ENCODE measurements at regions of chr1 and their contacts with region 1.

Region 1: GRCh38 chr1:93629099-93630059 is 52.3 kb downstream of the BCAR3 start:
- DNase-seq: no peak
- H3K4me3 ChIP-seq: no peak overlapping the region
- H3K27ac ChIP-seq: no peak overlapping the region
- H3K4me1 ChIP-seq: 0 out of 7 replicates have a peak, but pooled peaks cover 0 to 2% (median 0%) of the 10 kb centered on the region in 4 experiments
- H3K27me3 ChIP-seq: no peaks in the 10 kb centered on the region
- CTCF ChIP-seq: peak in 2 of 3 experiments; percentile 81 to 86; a peak in 3 of 4 replicates
- EP300 ChIP-seq: no peak; a peak in 1 of 3 replicates
- POLR2A ChIP-seq: no peak
- RAD21 ChIP-seq: peak; percentile 98 to 99

Region 2: GRCh38 chr1:93533677-93534076 is 95.7 kb before region 1 on chr1:
- CTCF ChIA-PET with region 1: no interaction called
- POLR2A ChIA-PET with region 1: no interaction called
- DNase-seq: no peak
- H3K4me3 ChIP-seq: no peak overlapping the region
- H3K27ac ChIP-seq: no peak overlapping the region
- H3K4me1 ChIP-seq: no peaks in the 10 kb centered on the region
- H3K27me3 ChIP-seq: no peaks in the 10 kb centered on the region
- CTCF ChIP-seq: no peak
- EP300 ChIP-seq: no peak
- POLR2A ChIP-seq: no peak
- RAD21 ChIP-seq: no peak

Region 3: GRCh38 chr1:93549811-93550210 is 79.6 kb before region 1 on chr1:
- CTCF ChIA-PET with region 1: no interaction called
- POLR2A ChIA-PET with region 1: no interaction called
- DNase-seq: no peak
- H3K4me3 ChIP-seq: no peak overlapping the region
- H3K27ac ChIP-seq: no peak overlapping the region
- H3K4me1 ChIP-seq: peaks cover 0 to 8% (median 5%) of the 10 kb centered on the region in 4 experiments; a peak in 3 of 7 replicates
- H3K27me3 ChIP-seq: no peaks in the 10 kb centered on the region
- CTCF ChIP-seq: no peak
- EP300 ChIP-seq: no peak
- POLR2A ChIP-seq: no peak
- RAD21 ChIP-seq: no peak

Region 4: GRCh38 chr1:93579891-93580290 is 49.5 kb before region 1 on chr1:
- CTCF ChIA-PET with region 1: no interaction called
- POLR2A ChIA-PET with region 1: no interaction called
- DNase-seq: peak in 1 of 2 experiments; percentile 39
- H3K4me3 ChIP-seq: no peak overlapping the region
- H3K27ac ChIP-seq: no peak overlapping the region
- H3K4me1 ChIP-seq: no peaks in the 10 kb centered on the region; a peak in 1 of 7 replicates
- H3K27me3 ChIP-seq: no peaks in the 10 kb centered on the region; a peak in 1 of 7 replicates
- CTCF ChIP-seq: no peak
- EP300 ChIP-seq: no peak
- POLR2A ChIP-seq: no peak
- RAD21 ChIP-seq: no peak

Region 5: DNA sequence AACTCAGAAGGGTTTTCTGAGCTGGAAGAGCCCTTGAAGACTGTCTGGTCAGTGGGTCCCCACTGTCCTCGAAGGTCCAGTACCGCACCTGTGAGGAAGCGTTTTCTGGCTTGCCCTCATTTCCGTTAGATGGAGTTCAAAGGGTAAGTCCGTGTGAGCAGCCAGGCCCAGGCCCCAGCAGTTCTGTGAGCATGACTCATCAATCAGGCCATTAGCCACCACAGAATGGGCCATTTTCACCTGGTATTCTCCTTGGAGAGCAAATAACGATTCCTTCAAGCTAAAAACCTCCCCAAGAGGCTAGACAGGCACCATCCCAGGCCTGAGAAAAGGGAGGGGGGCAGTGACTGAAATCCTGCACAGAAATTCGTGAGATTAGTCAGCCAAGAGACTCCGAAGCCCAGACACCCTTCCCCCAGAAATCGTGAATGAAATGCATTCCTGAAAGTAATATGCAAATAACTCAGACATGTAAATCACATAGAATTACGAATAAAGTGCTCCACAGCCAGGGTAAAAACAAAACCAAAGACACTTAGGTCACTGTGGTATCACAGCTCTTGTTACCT is 13.7 kb before region 1 on chr1:
- CTCF ChIA-PET with region 1: interaction called, 77 read pairs
- POLR2A ChIA-PET with region 1: no interaction called
- DNase-seq: no peak
- H3K4me3 ChIP-seq: peak overlapping the region in 1 of 4 experiments; percentile 11; a peak in 2 of 8 replicates
- H3K27ac ChIP-seq: 0 out of 2 replicates have a peak overlapping the region, but pooled peaks have one; percentile 13
- H3K4me1 ChIP-seq: peaks cover 19 to 36% (median 25%) of the 10 kb centered on the region in 4 experiments
- H3K27me3 ChIP-seq: no peaks in the 10 kb centered on the region
- CTCF ChIP-seq: no peak
- EP300 ChIP-seq: no peak
- POLR2A ChIP-seq: no peak
- RAD21 ChIP-seq: no peak

Region 6: DNA sequence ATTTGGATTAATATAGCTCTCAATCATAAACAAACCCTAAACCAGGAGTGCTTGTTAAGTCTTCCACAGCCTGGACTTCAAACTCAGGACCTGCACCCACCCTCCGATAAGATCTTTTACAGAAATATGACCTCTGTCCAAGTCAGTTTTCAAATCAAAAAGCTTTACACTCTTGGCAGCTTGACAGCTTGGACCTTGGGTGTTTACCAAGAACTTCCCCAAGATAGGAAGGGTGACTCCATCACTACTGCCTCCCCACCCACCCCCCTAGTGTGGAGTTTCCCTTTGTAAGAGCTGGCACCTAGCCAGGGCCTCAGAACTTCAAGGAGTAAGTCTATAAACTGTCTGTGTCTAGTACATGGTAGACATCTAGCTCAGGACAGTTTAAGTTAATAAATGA is 42.7 kb after region 1 on chr1:
- CTCF ChIA-PET with region 1: interaction called, 98 read pairs
- POLR2A ChIA-PET with region 1: interaction called, 3 read pairs
- DNase-seq: no peak
- H3K4me3 ChIP-seq: no peak overlapping the region
- H3K27ac ChIP-seq: no peak overlapping the region
- H3K4me1 ChIP-seq: peaks cover 0 to 2% (median 2%) of the 10 kb centered on the region in 4 experiments; a peak in 4 of 7 replicates
- H3K27me3 ChIP-seq: no peaks in the 10 kb centered on the region
- CTCF ChIP-seq: no peak
- EP300 ChIP-seq: no peak
- POLR2A ChIP-seq: no peak
- RAD21 ChIP-seq: no peak

Region 7: GRCh38 chr1:93695436-93696005 is 66.1 kb after region 1 on chr1:
- CTCF ChIA-PET with region 1: interaction called, 33 read pairs
- POLR2A ChIA-PET with region 1: no interaction called
- DNase-seq: no peak
- H3K4me3 ChIP-seq: no peak overlapping the region
- H3K27ac ChIP-seq: no peak overlapping the region
- H3K4me1 ChIP-seq: peaks cover 0 to 4% (median 2%) of the 10 kb centered on the region in 4 experiments; a peak in 4 of 7 replicates
- H3K27me3 ChIP-seq: no peaks in the 10 kb centered on the region
- CTCF ChIP-seq: no peak
- EP300 ChIP-seq: no peak
- POLR2A ChIP-seq: no peak
- RAD21 ChIP-seq: no peak

Region 8: DNA sequence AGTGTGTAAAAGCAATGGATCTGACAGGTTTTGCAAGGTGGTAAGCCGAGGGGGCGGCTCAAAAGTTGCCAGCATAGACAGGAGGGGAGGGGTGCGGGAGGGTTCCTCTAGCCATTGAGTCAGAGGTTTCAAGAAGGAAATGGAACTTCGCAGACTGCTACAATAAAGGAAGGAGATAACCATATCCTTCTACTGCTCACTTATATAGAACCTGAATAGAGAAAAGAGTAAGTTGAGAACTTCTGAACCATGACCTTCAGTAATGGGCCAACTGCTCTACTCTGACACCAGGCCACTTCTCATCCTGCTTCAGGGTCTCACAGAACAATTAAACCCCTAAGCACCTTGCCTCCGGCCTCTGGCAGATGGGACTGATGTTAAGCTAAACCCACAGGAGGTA is 78.6 kb after region 1 on chr1:
- CTCF ChIA-PET with region 1: interaction called, 33 read pairs
- POLR2A ChIA-PET with region 1: no interaction called
- DNase-seq: no peak
- H3K4me3 ChIP-seq: no peak overlapping the region
- H3K27ac ChIP-seq: no peak overlapping the region
- H3K4me1 ChIP-seq: peaks cover 0 to 4% (median 2%) of the 10 kb centered on the region in 4 experiments; a peak in 2 of 7 replicates
- H3K27me3 ChIP-seq: peaks cover 0 to 1% (median 0%) of the 10 kb centered on the region in 4 experiments; a peak in 1 of 7 replicates
- CTCF ChIP-seq: no peak
- EP300 ChIP-seq: no peak
- POLR2A ChIP-seq: no peak
- RAD21 ChIP-seq: no peak

Region 9: DNA sequence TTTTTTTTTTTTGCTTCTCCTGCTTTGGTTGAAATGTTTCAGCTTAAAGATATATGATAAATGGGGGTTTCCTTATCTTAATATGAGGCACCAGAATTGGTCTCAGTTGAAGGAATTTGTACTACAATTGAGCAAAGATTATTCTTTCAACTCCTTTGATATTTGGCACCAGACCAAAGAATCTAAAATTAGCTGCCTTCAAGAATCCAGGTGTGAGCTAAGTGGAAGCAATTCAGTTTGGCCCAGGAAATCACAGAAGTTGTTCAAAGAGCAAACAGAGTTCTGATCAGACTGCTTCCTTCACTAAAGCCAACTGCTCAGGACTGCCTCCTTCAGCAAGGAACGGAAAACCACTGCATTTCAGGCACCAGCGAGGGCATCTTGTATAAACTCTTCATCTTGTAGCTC is 120.5 kb after region 1 on chr1:
- CTCF ChIA-PET with region 1: interaction called, 28 read pairs
- POLR2A ChIA-PET with region 1: no interaction called
- DNase-seq: peak in 1 of 2 experiments; percentile 25
- H3K4me3 ChIP-seq: no peak overlapping the region
- H3K27ac ChIP-seq: no peak overlapping the region
- H3K4me1 ChIP-seq: no peaks in the 10 kb centered on the region
- H3K27me3 ChIP-seq: no peaks in the 10 kb centered on the region; a peak in 1 of 7 replicates
- CTCF ChIP-seq: peak; percentile 41 to 73 (median 56)
- EP300 ChIP-seq: no peak
- POLR2A ChIP-seq: no peak
- RAD21 ChIP-seq: peak; percentile 43 to 66; a peak in 3 of 4 replicates

Measured in H1 (cell line).